ENCODE measurements at regions of chr17 and their contacts with region 1.

Region 1: GRCh38 chr17:39636927-39637736 is at the start of gene STARD3:
- DNase-seq: peak; percentile 90
- ATAC-seq: peak; percentile 92
- H3K4me3 Mint-ChIP-seq: peak within 1 kb of the TSS; percentile 90
- H3K27ac Mint-ChIP-seq: peak within 1 kb of the TSS; percentile 86
- H3K4me1 Mint-ChIP-seq: peaks cover 63% of the 10 kb centered on the region
- H3K27me3 Mint-ChIP-seq: no peaks in the 10 kb centered on the region
- CTCF ChIP-seq: no peak
- total RNA-seq, gene STARD3: 51.8 and 58.2 TPM in 2 replicates

Region 2: GRCh38 chr17:39653662-39654331 is 16.7 kb after region 1 on chr17:
- CTCF ChIA-PET with region 1: interaction called, 14 read pairs
- POLR2A ChIA-PET with region 1: no interaction called
- intact Hi-C with region 1: loop called (anchors 2 kb)
- DNase-seq: no peak
- ATAC-seq: peak; percentile 75
- H3K4me3 Mint-ChIP-seq: no peak overlapping the region
- H3K27ac Mint-ChIP-seq: no peak overlapping the region
- H3K4me1 Mint-ChIP-seq: peaks cover 33% of the 10 kb centered on the region
- H3K27me3 Mint-ChIP-seq: no peaks in the 10 kb centered on the region
- CTCF ChIP-seq: no peak

Region 3: GRCh38 chr17:39659279-39660010 is 22.3 kb after region 1 on chr17:
- CTCF ChIA-PET with region 1: interaction called, 14 read pairs
- POLR2A ChIA-PET with region 1: no interaction called
- intact Hi-C with region 1: loop called (anchors 2 kb)
- DNase-seq: no peak
- ATAC-seq: peak; percentile 70
- H3K4me3 Mint-ChIP-seq: peak overlapping the region; percentile 38
- H3K27ac Mint-ChIP-seq: peak overlapping the region; percentile 82
- H3K4me1 Mint-ChIP-seq: peaks cover 47% of the 10 kb centered on the region
- H3K27me3 Mint-ChIP-seq: no peaks in the 10 kb centered on the region
- CTCF ChIP-seq: no peak

Region 4: DNA sequence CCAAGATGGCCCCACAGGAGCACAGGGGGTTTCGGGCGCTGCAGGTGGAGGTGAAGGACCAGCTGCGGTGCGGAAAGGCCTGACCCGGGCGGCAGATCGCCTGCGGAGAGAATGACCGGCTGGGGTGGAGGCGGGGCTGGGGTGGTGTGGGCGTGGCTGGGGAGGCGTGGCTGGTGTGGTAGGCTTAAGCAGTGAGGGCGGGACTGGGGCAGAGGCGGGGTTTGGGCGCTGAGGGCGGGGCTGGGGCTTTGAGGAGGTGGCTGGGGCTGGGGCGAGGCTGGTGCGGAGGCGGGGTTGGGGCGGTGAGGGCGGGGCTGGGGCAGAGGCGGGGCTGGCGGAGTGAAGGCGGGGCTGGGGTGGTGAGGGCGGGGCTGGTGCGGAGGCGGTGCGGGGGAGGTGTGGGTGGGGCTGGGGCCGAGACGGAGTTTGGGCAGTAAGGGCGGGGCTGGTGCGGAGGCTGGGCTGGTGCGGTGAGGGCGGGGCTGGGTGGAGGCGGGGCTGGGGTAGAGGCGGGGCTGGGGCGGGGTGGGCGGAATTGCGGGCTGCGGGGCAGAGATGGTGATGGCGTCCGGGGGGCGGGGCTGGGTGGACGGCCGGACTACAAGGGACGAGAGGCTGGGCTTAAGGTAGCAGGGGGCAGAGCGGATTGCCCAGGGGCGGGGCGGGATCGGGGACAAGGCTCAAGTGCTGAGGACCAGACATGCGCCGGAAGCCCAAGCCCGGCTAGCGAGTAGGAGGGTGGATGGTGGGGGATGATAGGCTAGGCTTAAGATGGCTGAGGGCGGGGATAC is 315.7 kb after region 1 on chr17:
- CTCF ChIA-PET with region 1: no interaction called
- POLR2A ChIA-PET with region 1: no interaction called
- intact Hi-C with region 1: loop called (anchors 1 kb)
- DNase-seq: peak; percentile 88
- ATAC-seq: peak; percentile 85
- H3K4me3 Mint-ChIP-seq: peak overlapping the region; percentile 85
- H3K27ac Mint-ChIP-seq: peak overlapping the region; percentile 83
- H3K4me1 Mint-ChIP-seq: peaks cover 29% of the 10 kb centered on the region
- H3K27me3 Mint-ChIP-seq: no peaks in the 10 kb centered on the region
- CTCF ChIP-seq: no peak

Measured in activated B cell treated with CpG ODN at 0.5 μM for 24 hours (primary cell).